Activated CD4-positive, alpha-beta memory T cell treated with anti-CD3 and anti-CD28 coated beads for 36 hours (primary cell): ENCODE measurements at regions of chr3 and their contacts with region 1.

Region 1: DNA sequence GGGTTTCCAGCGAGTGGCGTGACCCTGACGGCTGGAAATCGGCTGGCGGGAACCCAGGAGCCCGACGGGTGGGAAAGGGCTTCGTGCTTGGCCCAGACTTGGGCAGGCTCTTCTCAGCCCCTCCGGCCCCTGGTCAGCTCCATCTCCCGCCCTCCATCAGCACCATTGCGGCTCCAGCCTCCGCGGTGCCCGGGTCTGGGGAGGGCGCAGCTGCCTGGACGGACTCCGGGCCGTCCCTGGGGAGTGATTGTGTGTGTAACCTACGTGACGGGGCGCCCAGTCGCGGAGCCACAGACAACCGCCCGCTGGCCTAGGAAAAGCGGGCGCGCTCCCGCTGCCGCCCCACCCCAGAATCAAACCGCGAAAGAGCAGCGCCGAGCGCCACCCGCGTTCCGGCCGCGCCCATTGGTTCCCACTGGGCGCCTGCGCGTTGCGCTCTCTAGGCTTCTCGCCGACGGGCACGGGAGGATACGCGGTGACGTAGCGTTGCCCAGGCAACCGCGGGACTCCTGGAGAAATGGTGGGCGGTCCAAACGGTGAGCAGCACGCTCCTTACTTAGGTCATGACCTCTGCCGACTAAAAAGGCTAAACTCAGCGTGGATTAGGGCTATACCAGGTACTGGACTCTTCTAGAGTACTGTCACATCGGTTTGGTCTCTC is at the start of gene CFAP20DC:
- DNase-seq: peak; percentile 95
- H3K4me3 Mint-ChIP-seq: peak within 1 kb of the TSS; percentile 70
- H3K27ac Mint-ChIP-seq: peak within 1 kb of the TSS; percentile 58
- H3K4me1 Mint-ChIP-seq: peaks cover 6% of the 10 kb centered on the region
- H3K27me3 Mint-ChIP-seq: no peaks in the 10 kb centered on the region
- total RNA-seq, gene CFAP20DC: 2.4 to 2.5 TPM

Region 2: DNA sequence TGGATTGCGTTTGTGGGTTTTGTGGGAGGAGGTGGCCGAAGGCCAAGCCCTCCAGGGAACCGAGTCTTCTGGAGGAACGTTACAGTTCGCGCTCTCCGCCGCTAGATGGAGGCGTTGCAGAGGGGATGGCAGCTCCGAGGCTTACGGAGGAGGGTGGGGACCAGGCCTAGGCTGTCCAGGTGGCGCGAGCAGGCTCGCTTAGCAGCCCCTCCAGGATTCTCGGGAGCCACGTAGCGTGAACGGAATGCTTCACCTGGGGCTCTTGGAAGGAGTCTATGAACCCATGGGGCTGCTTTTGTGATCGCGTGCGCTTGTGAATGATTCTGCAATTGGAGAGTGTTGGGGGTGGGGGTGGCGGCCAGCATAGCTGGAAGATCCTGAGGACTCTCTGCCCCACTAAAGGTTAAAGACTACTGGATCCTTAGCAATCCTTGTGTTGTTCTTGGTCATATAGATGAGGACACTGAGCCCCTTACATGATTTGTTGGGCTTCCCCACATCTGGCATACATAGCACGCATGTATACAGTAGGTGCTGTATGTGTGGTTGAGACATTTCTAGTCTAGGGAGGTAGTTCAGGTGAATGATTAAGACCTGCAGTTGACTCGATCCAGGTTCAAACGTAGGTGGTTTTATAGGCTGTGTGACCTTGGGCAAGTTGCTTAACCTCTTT is 409.0 kb before region 1 on chr3:
- CTCF ChIA-PET with region 1: interaction called, 46 read pairs
- POLR2A ChIA-PET with region 1: no interaction called
- intact Hi-C with region 1: loop called (anchors 1 kb)
- DNase-seq: peak; percentile 71
- H3K4me3 Mint-ChIP-seq: no peak overlapping the region
- H3K27ac Mint-ChIP-seq: no peak overlapping the region
- H3K4me1 Mint-ChIP-seq: no peaks in the 10 kb centered on the region
- H3K27me3 Mint-ChIP-seq: no peaks in the 10 kb centered on the region

Region 3: DNA sequence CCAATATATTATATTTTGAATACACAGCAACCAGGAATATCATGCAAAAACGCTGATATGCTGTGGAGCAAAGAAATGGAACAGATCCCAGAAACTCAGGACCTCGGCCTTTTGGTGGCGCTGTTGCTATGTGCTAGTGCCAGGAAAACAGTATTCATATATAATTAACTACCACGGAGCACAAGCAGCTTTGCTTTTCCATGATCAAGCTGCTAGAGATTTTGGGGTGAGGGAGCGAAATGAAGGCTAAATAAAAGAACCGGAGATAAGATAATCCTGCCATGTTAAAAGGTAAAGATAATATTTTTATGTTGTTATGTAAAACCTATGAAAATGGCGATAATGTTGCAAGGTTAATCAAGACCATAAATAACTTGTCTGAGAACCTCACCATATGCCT is 225.5 kb before region 1 on chr3:
- CTCF ChIA-PET with region 1: interaction called, 12 read pairs
- POLR2A ChIA-PET with region 1: no interaction called
- intact Hi-C with region 1: loop called (anchors 1 kb)
- DNase-seq: peak; percentile 51
- H3K4me3 Mint-ChIP-seq: no peak overlapping the region
- H3K27ac Mint-ChIP-seq: no peak overlapping the region
- H3K4me1 Mint-ChIP-seq: no peaks in the 10 kb centered on the region
- H3K27me3 Mint-ChIP-seq: peaks cover 2% of the 10 kb centered on the region

Region 4: DNA sequence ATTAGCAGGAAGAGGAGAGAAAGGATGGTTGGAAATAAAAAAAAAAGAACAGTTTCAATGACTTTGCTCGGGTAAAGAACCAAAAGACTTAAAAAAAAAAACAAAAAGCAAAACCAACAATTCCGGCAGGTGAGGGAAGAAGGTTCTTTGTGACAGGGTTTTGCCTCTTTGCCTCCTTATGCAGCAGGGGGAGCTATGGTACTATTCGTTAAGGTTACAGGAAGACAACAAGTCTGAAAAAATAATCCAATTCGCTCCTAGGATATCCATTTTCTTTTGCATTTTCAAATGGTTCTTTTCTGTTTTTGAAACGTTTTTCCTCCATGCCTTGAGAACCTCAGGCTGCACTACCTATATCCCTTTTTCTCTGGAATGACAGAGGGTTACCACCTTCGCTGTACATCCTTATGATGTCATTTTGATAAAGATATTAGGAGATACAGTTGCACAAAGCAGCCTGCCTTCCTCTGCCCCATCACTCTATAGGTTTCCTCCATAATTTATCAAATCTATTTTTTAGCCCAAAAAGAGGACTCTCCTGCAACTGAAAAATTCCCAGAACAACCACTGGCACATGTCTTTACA is 55.0 kb before region 1 on chr3:
- CTCF ChIA-PET with region 1: interaction called, 25 read pairs
- POLR2A ChIA-PET with region 1: interaction called, 3 read pairs
- intact Hi-C with region 1: loop called (anchors 1 kb)
- DNase-seq: peak; percentile 19
- H3K4me3 Mint-ChIP-seq: no peak overlapping the region
- H3K27ac Mint-ChIP-seq: no peak overlapping the region
- H3K4me1 Mint-ChIP-seq: peaks cover 7% of the 10 kb centered on the region
- H3K27me3 Mint-ChIP-seq: peaks cover 1% of the 10 kb centered on the region